Activated T-helper 2 cell treated with anti-CD3 and anti-CD28 coated beads, Interferon-gamma antibody, Interleukin-2, Interleukin-4, amounts not matched to agents 10 μg/mL and 5 μg/mL and 100 μg/mL, durations not matched to agents 14 hours and 24 hours and 36 hours (primary cell): ENCODE measurements at regions of chr11 and their contacts with region 1.

Region 1: DNA sequence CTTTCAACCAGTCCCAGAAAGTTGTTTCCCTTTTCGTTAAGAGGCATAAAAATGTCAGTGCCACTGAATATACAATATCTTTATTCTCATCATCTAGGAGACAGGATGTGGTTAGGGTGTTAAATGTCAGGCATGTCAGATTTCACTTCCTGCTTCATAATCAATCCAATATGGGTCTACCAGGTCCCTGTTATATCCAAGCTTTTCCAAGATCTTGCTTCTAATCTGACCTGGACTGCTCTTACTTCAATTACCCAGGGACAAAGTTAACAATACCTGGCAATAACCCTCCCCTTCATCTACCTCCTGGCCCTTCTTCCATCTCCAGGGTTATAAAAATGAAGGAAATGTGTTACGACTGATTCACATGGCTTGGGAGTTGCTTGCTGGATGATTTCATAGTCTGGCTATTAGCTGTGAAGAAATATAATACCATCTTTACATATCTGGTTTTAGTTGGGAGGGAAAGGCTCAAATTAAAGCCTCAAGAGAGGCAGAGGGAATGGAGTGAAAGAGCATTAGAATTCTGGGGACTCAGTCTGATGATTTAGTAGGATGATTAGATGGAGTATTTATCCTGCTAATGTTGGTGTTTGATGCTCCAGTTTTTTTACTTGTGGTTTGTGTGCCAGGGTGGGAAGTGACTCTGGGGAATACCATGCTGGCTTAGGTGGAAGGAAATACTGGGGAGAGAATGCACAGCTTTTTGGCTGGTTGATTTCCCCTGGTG is 534.3 kb downstream of the ETS1 start:
- DNase-seq: no peak
- H3K4me3 Mint-ChIP-seq: peak overlapping the region; percentile 48
- H3K27ac Mint-ChIP-seq: peak overlapping the region; percentile 76
- H3K4me1 Mint-ChIP-seq: peaks cover 56% of the 10 kb centered on the region
- H3K27me3 Mint-ChIP-seq: no peaks in the 10 kb centered on the region

Region 2: DNA sequence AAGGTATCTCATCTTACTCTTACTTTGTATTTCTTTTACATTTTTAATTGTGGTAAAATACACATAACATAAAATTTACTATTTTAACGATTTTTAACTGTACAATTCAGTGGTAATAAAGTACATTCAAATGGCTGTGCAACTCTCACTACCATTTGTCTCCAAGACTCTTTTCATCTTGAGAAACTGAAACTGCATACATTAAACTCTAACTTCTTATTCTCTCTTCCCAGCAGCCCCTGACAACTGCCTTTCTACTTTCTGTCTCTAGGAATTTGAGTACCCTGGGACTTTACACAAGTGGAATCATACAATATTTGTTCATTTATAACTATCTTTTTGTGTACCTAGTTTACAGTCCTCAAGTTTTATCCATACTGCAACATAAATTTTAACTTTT is 326.7 kb before region 1 on chr11:
- intact Hi-C with region 1: no loop called
- DNase-seq: no peak
- H3K4me3 Mint-ChIP-seq: no peak overlapping the region
- H3K27ac Mint-ChIP-seq: no peak overlapping the region
- H3K4me1 Mint-ChIP-seq: no peaks in the 10 kb centered on the region
- H3K27me3 Mint-ChIP-seq: no peaks in the 10 kb centered on the region

Region 3: GRCh38 chr11:128105950-128106349 is 52.9 kb after region 1 on chr11:
- intact Hi-C with region 1: loop called (anchors 5 kb)
- DNase-seq: no peak
- H3K4me3 Mint-ChIP-seq: no peak overlapping the region
- H3K27ac Mint-ChIP-seq: no peak overlapping the region
- H3K4me1 Mint-ChIP-seq: peaks cover 12% of the 10 kb centered on the region
- H3K27me3 Mint-ChIP-seq: peaks cover 1% of the 10 kb centered on the region

Region 4: DNA sequence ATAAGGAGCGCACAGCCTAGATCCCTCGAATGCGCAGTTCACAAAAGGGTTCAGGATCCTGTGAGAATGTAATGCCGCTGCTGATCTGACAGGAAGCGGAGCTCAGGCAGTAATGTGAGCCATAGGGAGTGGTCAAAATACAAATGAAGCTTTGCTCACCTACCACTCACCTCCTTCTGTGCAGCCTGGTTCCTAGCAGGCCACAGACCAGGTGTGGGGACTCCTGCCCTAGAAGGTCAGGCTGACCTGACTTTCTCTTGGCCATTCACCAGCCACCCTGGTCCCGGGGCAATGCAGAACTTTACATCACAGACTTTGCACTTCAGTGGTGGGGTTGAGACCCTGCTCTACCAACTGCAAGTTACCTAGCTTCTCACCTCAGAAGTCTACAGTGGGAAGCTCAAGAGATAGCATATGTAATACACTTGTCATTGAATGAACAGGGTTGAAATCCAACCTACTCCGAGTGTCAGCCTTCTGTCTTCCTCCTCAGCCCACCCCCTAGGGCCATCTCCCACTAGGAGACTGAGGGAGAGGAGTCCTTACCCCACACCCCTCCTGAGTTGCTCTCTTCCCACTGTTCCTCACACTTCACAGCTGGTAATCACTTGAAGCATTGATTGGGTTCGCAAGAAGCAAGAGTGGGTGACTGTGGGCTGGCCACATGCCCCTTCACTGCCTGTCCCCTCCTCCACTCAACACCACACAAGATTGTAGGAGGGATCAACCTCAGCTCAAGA is 815.9 kb after region 1 on chr11:
- intact Hi-C with region 1: loop called (anchors 5 kb)
- DNase-seq: peak; percentile 21
- H3K4me3 Mint-ChIP-seq: no peak overlapping the region
- H3K27ac Mint-ChIP-seq: no peak overlapping the region
- H3K4me1 Mint-ChIP-seq: no peaks in the 10 kb centered on the region
- H3K27me3 Mint-ChIP-seq: peaks cover 17% of the 10 kb centered on the region